ENCODE measurements at regions of chr20 and their contacts with region 1.

Region 1: GRCh38 chr20:18507218-18508021 is at the start of gene SEC23B:
- DNase-seq: peak; percentile 99
- H3K4me3 Mint-ChIP-seq: peak within 1 kb of the TSS; percentile 96
- H3K27ac Mint-ChIP-seq: peak within 1 kb of the TSS; percentile 97
- H3K4me1 Mint-ChIP-seq: peaks cover 40% of the 10 kb centered on the region
- H3K27me3 Mint-ChIP-seq: no peaks in the 10 kb centered on the region
- total RNA-seq, gene SEC23B: 90.6 to 97.1 TPM

Region 2: DNA sequence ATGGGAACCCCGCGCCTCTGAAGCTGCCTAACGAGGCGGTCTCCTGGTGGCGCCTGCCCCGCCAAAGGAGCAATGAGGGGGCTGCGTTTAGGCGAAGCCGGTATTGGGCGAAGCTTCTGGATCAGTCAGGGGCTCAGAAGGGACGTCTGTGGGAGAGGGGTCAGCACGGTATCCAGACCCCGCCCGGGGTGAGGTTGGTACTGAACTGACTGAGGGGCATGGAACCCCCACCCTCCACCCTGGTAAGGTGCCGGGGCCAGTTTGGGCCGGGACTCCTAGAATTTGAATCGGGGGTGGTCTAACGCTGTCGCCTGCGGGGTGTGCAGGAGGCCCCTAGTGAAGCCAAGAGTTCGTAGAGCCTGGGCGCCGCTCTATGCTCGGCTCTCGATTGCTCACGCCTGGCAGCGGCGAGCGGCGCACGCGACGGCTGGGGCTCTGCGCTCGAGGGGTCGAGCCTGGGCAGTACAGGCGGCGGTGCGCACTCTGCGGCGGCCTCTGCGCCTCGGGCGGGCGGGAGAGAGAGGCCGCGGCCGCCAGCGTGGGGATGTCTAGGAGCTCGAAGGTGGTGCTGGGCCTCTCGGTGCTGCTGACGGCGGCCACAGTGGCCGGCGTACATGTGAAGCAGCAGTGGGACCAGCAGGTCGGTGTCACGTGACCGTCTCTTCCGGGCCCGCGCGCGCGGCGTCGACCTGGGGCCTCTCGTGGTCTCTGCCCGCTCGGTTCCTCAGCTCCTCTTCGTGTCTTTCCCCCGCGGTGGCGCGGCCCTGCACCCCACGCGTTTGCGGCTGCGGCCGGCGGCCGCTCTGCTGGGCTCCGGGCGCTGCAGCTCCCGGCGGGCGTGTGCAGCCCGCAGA is 369.8 kb before region 1 on chr20 and contains the starts of genes KAT14 and PET117:
- CTCF ChIA-PET with region 1: no interaction called
- POLR2A ChIA-PET with region 1: interaction called, 3 read pairs
- intact Hi-C with region 1: loop called (anchors 5 kb)
- DNase-seq: peak; percentile 93
- H3K4me3 Mint-ChIP-seq: peak within 1 kb of the TSS; percentile 65
- H3K27ac Mint-ChIP-seq: peak within 1 kb of the TSS; percentile 76
- H3K4me1 Mint-ChIP-seq: peaks cover 29% of the 10 kb centered on the region
- H3K27me3 Mint-ChIP-seq: no peaks in the 10 kb centered on the region
- total RNA-seq, gene KAT14: 14.2 to 14.4 TPM
- total RNA-seq, gene PET117: 15.2 to 15.9 TPM

Region 3: DNA sequence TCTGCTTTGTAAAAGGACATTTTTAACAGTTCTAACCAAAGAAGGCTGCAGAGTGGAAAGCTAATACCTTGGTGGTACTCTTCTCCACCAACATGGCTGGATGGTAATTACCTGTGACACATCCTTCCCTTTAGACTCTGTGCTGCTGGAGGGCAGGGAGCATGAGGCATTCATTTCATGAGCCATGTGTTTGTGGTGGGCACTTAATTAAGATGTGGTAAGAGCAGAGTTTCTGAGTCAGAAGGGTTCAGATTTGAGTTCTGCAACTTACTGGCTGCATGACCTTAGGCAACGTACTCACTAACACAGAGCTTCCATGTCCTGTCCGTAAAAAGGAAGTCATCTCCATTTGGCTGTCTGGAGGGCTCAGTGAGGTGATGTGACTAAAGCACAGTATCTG is 228.2 kb before region 1 on chr20:
- CTCF ChIA-PET with region 1: no interaction called
- POLR2A ChIA-PET with region 1: no interaction called
- intact Hi-C with region 1: no loop called
- DNase-seq: no peak
- H3K4me3 Mint-ChIP-seq: no peak overlapping the region
- H3K27ac Mint-ChIP-seq: no peak overlapping the region
- H3K4me1 Mint-ChIP-seq: peaks cover 2% of the 10 kb centered on the region
- H3K27me3 Mint-ChIP-seq: peaks cover 38% of the 10 kb centered on the region

Region 4: DNA sequence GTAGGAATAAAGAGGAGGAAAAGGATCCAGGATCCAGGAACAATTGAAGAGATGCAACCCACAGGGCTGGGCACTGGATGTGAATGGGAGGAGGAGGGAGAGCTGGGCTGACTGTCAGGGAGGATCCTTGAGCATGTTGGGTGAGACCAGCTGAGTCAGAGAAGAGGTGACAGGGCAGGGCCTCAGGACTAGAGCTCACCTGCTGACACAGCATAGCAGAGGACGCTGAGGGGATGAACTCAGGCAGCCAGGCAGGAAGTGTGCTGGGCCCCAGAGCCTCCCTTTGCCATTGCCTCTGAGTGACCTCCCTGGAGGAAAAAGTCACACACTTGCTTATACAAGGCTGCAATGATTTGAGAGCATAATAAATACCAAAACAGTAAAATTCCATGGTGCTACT is 146.8 kb before region 1 on chr20:
- CTCF ChIA-PET with region 1: no interaction called
- POLR2A ChIA-PET with region 1: no interaction called
- intact Hi-C with region 1: no loop called
- DNase-seq: peak; percentile 16
- H3K4me3 Mint-ChIP-seq: no peak overlapping the region
- H3K27ac Mint-ChIP-seq: no peak overlapping the region
- H3K4me1 Mint-ChIP-seq: no peaks in the 10 kb centered on the region
- H3K27me3 Mint-ChIP-seq: peaks cover 1% of the 10 kb centered on the region

Region 5: DNA sequence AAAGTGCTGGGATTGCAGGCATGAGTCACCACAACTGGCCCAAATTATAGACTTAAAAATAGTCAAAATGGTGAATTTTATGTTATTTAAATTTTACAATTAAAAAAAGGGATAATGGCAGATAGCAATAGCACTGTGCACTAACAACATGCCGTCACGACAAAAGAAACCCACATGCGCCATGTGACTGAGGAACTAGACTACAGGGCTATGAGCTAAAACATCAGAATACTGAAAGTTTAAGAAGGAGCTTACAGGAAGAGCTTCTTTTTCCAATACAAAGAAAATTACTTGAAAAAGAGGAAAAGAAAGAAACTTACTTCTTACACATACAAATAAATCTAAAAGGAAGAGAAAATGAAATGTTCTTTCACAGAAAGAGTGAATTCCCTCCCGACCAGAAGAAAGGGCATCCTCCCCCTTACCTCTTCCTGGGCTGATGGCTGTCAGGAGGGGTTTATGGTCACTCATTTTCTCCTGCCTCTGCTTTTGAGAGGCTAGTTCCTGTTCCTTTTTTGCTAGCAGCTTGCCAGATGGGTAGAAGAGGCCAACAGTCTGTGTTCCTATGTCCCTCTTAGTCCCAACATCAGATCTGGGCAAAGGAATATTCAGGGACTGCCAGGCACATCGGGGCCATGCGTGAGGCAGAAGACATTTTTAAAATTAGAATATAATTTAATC is 95.1 kb before region 1 on chr20:
- CTCF ChIA-PET with region 1: interaction called, 10 read pairs
- POLR2A ChIA-PET with region 1: no interaction called
- intact Hi-C with region 1: loop called (anchors 1 kb)
- DNase-seq: no peak
- H3K4me3 Mint-ChIP-seq: no peak overlapping the region
- H3K27ac Mint-ChIP-seq: no peak overlapping the region
- H3K4me1 Mint-ChIP-seq: peaks cover 3% of the 10 kb centered on the region
- H3K27me3 Mint-ChIP-seq: no peaks in the 10 kb centered on the region

Region 6: GRCh38 chr20:18466894-18467730 is 40.3 kb before region 1 on chr20 and contains the starts of genes DZANK1 and POLR3F:
- CTCF ChIA-PET with region 1: interaction called, 8 read pairs
- POLR2A ChIA-PET with region 1: interaction called, 21 read pairs
- intact Hi-C with region 1: loop called (anchors 1 kb)
- DNase-seq: peak; percentile 96
- H3K4me3 Mint-ChIP-seq: peak within 1 kb of the TSS; percentile 95
- H3K27ac Mint-ChIP-seq: peak within 1 kb of the TSS; percentile 87
- H3K4me1 Mint-ChIP-seq: peaks cover 23% of the 10 kb centered on the region
- H3K27me3 Mint-ChIP-seq: no peaks in the 10 kb centered on the region
- total RNA-seq, gene DZANK1: 1.4 to 1.6 TPM
- total RNA-seq, gene POLR3F: 11.0 to 11.3 TPM

Region 7: GRCh38 chr20:18496740-18497592 is 10.5 kb before region 1 on chr20 and contains the start of gene RBBP9:
- CTCF ChIA-PET with region 1: interaction called, 12 read pairs
- POLR2A ChIA-PET with region 1: interaction called, 57 read pairs
- intact Hi-C with region 1: loop called (anchors 1 kb)
- DNase-seq: peak; percentile 87
- H3K4me3 Mint-ChIP-seq: peak within 1 kb of the TSS; percentile 98
- H3K27ac Mint-ChIP-seq: peak within 1 kb of the TSS; percentile 84
- H3K4me1 Mint-ChIP-seq: peaks cover 9% of the 10 kb centered on the region
- H3K27me3 Mint-ChIP-seq: no peaks in the 10 kb centered on the region
- total RNA-seq, gene RBBP9: 15.9 to 17.7 TPM

Region 8: GRCh38 chr20:18587665-18588573 is 80.5 kb after region 1 on chr20 and contains the start of gene DTD1:
- CTCF ChIA-PET with region 1: no interaction called
- POLR2A ChIA-PET with region 1: interaction called, 3 read pairs
- intact Hi-C with region 1: loop called (anchors 1 kb)
- DNase-seq: peak; percentile 94
- H3K4me3 Mint-ChIP-seq: peak within 1 kb of the TSS; percentile 86
- H3K27ac Mint-ChIP-seq: peak within 1 kb of the TSS; percentile 77
- H3K4me1 Mint-ChIP-seq: peaks cover 32% of the 10 kb centered on the region
- H3K27me3 Mint-ChIP-seq: peaks cover 5% of the 10 kb centered on the region
- total RNA-seq, gene DTD1: 49.2 to 55.4 TPM

Measured in activated CD4-positive, alpha-beta memory T cell treated with anti-CD3 and anti-CD28 coated beads for 36 hours (primary cell).